CD4-positive, alpha-beta memory T cell (primary cell): ENCODE measurements at regions of chr1 and their contacts with region 1.

Region 1: DNA sequence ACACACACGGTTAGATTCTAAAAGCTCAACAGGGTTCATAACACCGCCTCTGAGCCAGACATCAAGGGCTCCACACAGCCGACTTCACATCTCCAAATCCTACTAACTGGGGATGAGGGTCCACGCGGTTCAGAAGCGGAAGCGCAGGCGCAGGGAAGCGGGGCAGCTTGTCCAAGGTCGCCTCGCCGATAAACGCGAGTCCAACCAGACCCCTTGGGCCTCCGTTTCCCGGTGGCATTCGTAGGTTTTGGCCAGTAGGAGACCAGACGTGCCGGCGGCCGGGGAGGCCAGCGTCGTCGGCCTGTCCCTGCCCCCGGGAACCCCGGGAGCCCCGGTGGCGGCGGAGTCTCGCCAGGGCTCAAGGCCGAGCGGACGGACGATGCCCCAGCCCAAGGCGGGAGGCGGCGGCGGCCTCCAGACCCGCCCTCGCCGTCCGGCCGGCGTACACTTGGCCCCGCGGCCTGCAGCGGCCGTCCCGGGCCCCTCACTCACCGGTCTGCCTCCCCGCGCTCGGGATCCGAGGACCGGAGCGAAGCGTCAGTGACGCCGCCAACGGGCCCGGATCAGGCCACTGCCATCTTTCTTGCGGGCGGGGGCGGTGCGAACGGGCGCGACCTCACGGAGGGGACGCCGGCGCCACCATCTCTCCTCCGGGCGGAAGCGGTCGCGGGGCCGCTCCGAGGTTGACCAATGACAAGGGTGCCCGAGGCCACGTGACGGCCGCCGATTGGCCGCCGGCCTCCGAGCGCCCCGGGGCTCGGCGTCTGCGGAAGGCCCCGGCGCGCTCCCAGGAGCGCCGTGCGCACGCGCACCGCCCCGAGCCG is at the start of gene SDF4:
- DNase-seq: peak; percentile 96 to 98 (median 96)
- H3K4me3 ChIP-seq: peak within 1 kb of the TSS; percentile 67 to 92
- H3K4me3 Mint-ChIP-seq: peak within 1 kb of the TSS; percentile 93 to 96 (median 94)
- H3K27ac ChIP-seq: peak within 1 kb of the TSS; percentile 96
- H3K27ac Mint-ChIP-seq: peak within 1 kb of the TSS; percentile 92 to 96 (median 95)
- H3K4me1 ChIP-seq: peaks cover 39% of the 10 kb centered on the region
- H3K4me1 Mint-ChIP-seq: peaks cover 15 to 49% (median 30%) of the 10 kb centered on the region in 4 donors
- H3K27me3 ChIP-seq: no peaks in the 10 kb centered on the region
- H3K27me3 Mint-ChIP-seq: no peaks in the 10 kb centered on the region
- total RNA-seq, gene SDF4: 125 to 138 TPM

Region 2: DNA sequence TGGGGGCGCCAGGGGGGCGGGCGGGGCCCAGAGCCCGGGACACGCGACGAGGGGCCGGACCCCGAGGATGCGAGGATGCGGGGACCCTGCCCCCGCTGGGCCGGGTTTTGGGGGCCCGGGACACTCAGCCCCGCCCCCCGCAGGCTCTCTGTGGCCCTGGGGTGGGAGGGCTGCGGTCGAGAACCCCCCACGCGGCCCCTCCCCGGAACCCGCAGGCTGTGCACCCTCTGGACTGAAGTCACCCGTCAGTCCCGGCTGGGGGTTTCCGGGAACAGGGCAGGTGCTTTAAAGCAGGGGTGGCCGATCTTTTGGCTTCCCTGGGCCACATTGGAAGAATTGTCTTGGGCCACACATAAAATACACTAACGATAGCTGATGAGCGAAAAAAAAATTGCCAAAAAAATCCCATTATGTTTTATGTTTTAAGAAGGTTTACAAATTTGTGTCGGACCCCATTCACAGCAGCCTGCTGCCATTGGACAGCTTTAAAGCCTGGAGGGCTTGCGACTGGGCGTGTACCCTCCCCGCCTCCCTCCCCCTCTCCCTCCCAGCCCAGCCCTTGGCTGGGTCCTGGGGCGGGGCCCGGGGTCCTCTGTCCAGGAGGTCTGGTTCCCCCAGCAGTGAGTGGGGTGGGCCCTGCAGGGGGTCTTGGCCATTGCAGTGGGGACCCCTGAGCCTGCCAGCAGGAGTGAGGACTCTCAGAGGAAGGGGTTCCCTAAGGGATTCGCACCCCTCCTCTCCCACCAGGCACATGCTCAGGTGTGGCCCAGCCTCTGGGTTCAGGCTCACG is 94.2 kb before region 1 on chr1:
- CTCF ChIA-PET with region 1: no interaction called
- POLR2A ChIA-PET with region 1: no interaction called
- intact Hi-C with region 1: loop called (anchors 5 kb)
- DNase-seq: peak; percentile 67 to 85 (median 72)
- H3K4me3 ChIP-seq: no peak overlapping the region
- H3K4me3 Mint-ChIP-seq: peak overlapping the region; percentile 60 to 88 (median 82)
- H3K27ac ChIP-seq: peak overlapping the region; percentile 30
- H3K27ac Mint-ChIP-seq: peak overlapping the region; percentile 71 to 97 (median 92)
- H3K4me1 ChIP-seq: peaks cover 24% of the 10 kb centered on the region
- H3K4me1 Mint-ChIP-seq: peaks cover 4 to 25% (median 9%) of the 10 kb centered on the region in 4 donors
- H3K27me3 ChIP-seq: no peaks in the 10 kb centered on the region
- H3K27me3 Mint-ChIP-seq: no peaks in the 10 kb centered on the region

Region 3: DNA sequence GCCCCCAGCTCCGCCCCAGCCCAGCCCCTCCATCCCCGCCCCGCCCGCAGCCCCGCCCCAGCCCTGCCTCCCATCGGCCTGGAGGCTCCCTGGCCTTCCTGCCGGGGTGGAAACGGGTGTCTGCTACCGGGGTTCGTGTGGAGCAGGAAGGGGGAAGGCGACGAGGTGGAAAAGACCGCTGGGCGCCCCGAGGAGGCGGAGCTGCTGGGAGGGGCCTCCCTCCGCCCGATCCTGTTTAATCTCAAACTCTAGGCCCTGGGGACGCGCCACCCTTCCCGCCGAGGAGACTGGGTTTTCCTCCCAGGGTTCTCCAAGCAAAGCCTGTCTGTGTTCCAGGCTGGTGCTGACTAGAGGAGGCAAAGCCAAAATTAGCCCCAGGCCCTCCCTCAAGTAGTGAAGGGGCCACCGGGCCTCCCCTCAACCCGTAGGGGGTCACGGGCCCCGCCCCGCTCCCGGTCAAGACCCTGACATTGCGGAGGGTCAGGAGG is 74.1 kb before region 1 on chr1:
- CTCF ChIA-PET with region 1: interaction called, 3 read pairs
- POLR2A ChIA-PET with region 1: interaction called, 17 read pairs
- intact Hi-C with region 1: no loop called
- DNase-seq: peak; percentile 41 to 71 (median 48)
- H3K4me3 ChIP-seq: peak overlapping the region; percentile 56 to 78
- H3K4me3 Mint-ChIP-seq: peak overlapping the region; percentile 63 to 87 (median 79)
- H3K27ac ChIP-seq: peak overlapping the region; percentile 86
- H3K27ac Mint-ChIP-seq: peak overlapping the region; percentile 58 to 90 (median 77)
- H3K4me1 ChIP-seq: peaks cover 8% of the 10 kb centered on the region
- H3K4me1 Mint-ChIP-seq: peaks cover 0 to 14% (median 3%) of the 10 kb centered on the region in 4 donors
- H3K27me3 ChIP-seq: no peaks in the 10 kb centered on the region
- H3K27me3 Mint-ChIP-seq: no peaks in the 10 kb centered on the region

Region 4: GRCh38 chr1:1206376-1207260 is 25.0 kb before region 1 on chr1 and contains the start of gene TNFRSF18:
- CTCF ChIA-PET with region 1: no interaction called
- POLR2A ChIA-PET with region 1: interaction called, 19 read pairs
- intact Hi-C with region 1: no loop called
- DNase-seq: peak in 3 of 5 donors; percentile 41 to 62 (median 42)
- H3K4me3 ChIP-seq: peak within 1 kb of the TSS in 1 of 2 donors; percentile 57
- H3K4me3 Mint-ChIP-seq: peak within 1 kb of the TSS; percentile 65 to 78 (median 75)
- H3K27ac ChIP-seq: peak within 1 kb of the TSS; percentile 84
- H3K27ac Mint-ChIP-seq: peak within 1 kb of the TSS; percentile 57 to 98 (median 77)
- H3K4me1 ChIP-seq: peaks cover 49% of the 10 kb centered on the region
- H3K4me1 Mint-ChIP-seq: peaks cover 9 to 34% (median 21%) of the 10 kb centered on the region in 4 donors
- H3K27me3 ChIP-seq: no peaks in the 10 kb centered on the region
- H3K27me3 Mint-ChIP-seq: no peaks in the 10 kb centered on the region
- total RNA-seq, gene TNFRSF18: 8.0 to 8.6 TPM

Region 5: DNA sequence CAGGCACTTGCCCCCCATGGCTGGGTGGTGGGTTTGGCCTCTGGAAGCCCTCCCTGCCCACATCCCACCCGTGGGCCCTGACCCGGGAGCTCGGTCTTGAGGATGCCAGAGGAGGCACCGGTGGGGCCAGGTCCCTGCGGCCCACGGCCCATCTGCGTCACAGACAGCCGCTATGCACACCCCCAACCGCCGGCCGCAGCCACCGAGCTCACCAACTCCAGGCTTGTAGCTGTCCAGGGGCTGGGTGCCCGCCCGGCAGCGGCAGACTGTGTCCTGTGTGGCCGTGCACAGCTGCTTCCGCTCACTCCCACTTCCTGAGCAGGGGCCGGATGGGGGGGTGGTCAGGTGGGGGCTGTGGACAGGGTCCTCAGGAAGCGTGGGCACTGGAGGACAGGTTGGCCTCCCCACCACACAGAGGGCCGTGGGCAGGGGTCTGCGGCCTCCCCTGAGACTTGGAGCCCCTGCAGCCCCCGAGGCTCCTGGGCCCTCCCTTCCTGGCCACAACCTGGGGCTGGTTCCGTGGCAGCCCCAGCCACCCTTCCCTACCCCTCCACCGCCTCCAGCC is 18.8 kb before region 1 on chr1:
- CTCF ChIA-PET with region 1: interaction called, 5 read pairs
- POLR2A ChIA-PET with region 1: interaction called, 19 read pairs
- intact Hi-C with region 1: loop called (anchors 2 kb)
- DNase-seq: peak; percentile 46 to 71 (median 57)
- H3K4me3 ChIP-seq: peak overlapping the region; percentile 55 to 78
- H3K4me3 Mint-ChIP-seq: peak overlapping the region; percentile 43 to 83 (median 74)
- H3K27ac ChIP-seq: peak overlapping the region; percentile 86
- H3K27ac Mint-ChIP-seq: peak overlapping the region in 6 of 7 donors; percentile 25 to 98 (median 57)
- H3K4me1 ChIP-seq: peaks cover 80% of the 10 kb centered on the region
- H3K4me1 Mint-ChIP-seq: peaks cover 17 to 64% (median 40%) of the 10 kb centered on the region in 4 donors
- H3K27me3 ChIP-seq: no peaks in the 10 kb centered on the region
- H3K27me3 Mint-ChIP-seq: no peaks in the 10 kb centered on the region

Region 6: DNA sequence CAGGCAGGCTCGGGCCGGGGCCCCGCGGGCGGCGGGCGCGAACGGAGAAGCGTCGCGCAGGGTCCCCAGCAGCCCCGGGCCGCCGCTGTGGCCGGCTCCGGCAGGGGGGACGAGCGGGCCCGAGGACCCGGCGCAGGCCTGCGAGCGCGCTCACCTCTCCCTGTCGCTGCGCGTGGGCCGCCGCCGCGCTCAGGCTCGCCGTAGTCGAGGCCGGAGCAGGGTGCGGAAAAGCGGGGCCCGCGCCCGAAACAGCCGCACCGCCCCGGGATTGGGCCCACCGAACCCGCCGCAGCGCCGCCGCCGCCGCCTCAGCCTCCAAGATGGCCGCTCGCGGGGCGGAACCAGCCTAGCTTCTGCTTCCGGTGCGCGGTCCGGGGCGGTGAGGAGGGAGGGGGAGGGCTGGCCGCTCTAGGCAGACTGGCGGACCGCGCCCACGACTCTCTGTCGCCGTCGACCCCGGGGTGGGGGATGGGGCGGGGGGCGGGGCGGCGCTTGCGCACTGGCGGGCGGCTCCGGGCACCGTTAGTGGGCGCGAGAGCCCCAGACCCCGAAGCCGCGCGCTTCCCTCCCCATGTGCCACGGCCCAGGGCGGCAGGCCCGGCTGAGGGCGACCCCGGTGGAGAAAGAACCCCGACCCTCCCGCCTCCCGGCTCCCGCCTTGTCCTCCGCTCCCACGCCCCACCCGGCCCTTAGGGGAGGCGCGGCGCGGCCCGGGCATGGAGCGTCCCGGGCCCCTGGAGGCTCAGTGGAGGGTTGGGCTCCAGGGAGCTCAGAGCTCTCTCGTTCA is 42.1 kb after region 1 on chr1 and contains the start of gene UBE2J2:
- CTCF ChIA-PET with region 1: no interaction called
- POLR2A ChIA-PET with region 1: interaction called, 4 read pairs
- intact Hi-C with region 1: loop called (anchors 1 kb)
- DNase-seq: peak; percentile 89 to 92 (median 90)
- H3K4me3 ChIP-seq: peak within 1 kb of the TSS; percentile 33 to 80
- H3K4me3 Mint-ChIP-seq: peak within 1 kb of the TSS; percentile 86 to 88 (median 87)
- H3K27ac ChIP-seq: peak within 1 kb of the TSS; percentile 83
- H3K27ac Mint-ChIP-seq: peak within 1 kb of the TSS; percentile 83 to 96 (median 89)
- H3K4me1 ChIP-seq: peaks cover 43% of the 10 kb centered on the region
- H3K4me1 Mint-ChIP-seq: peaks cover 22 to 40% (median 32%) of the 10 kb centered on the region in 4 donors
- H3K27me3 ChIP-seq: no peaks in the 10 kb centered on the region
- H3K27me3 Mint-ChIP-seq: no peaks in the 10 kb centered on the region
- total RNA-seq, gene UBE2J2: 82.8 to 92.9 TPM

Region 7: DNA sequence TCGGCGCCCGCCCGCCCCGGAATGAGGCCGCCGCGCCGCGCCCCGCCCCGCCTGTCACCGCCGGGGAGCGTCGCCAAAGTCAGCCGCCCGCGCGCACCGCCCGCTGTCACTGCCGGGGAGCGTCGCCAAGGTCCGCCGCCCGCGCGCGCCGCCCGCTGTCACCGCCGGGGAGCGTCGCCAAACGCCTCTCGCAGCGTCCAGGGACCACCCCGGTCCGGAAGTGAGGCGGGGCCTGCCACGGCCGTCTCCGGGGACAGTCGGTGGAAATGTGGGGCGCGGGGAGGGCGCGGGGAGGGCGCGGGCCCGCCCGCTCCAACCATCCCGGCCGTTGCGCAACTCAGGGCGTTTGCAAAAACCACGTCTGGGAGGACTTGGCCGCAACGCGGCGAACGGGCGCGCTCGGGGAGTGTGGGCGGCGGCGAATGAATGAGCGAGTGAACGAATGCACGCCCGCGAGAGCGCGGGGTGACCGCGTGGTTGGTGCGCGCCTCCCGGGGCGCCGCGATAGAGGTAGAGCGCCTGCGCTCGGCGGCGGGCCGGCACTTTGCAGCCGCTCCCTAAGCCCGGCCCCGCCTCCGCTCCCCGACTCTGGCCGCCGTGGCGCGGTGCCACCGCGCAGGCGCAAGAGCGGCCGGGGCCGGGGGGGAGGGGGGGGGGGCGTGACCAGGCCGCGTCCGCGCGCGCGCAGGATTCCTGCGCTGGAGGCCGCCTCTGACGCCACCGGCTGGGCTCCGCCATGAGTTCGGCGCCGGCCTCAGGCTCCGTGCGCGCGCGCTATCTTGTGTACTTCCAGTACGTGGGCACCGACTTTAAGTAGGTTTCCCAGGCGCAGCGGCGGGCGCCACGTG is 76.5 kb after region 1 on chr1 and contains the starts of genes ACAP3 and PUSL1:
- CTCF ChIA-PET with region 1: no interaction called
- POLR2A ChIA-PET with region 1: no interaction called
- intact Hi-C with region 1: loop called (anchors 1 kb)
- DNase-seq: peak; percentile 92 to 94 (median 92)
- H3K4me3 ChIP-seq: peak within 1 kb of the TSS; percentile 61 to 83
- H3K4me3 Mint-ChIP-seq: peak within 1 kb of the TSS; percentile 86 to 92 (median 89)
- H3K27ac ChIP-seq: peak within 1 kb of the TSS; percentile 77
- H3K27ac Mint-ChIP-seq: peak within 1 kb of the TSS; percentile 89 to 96 (median 91)
- H3K4me1 ChIP-seq: peaks cover 36% of the 10 kb centered on the region
- H3K4me1 Mint-ChIP-seq: peaks cover 13 to 29% (median 20%) of the 10 kb centered on the region in 4 donors
- H3K27me3 ChIP-seq: no peaks in the 10 kb centered on the region
- H3K27me3 Mint-ChIP-seq: no peaks in the 10 kb centered on the region
- total RNA-seq, gene ACAP3: 59.7 to 65.6 TPM
- total RNA-seq, gene PUSL1: 24.1 to 27.9 TPM

Region 8: GRCh38 chr1:1406817-1407635 is 175.4 kb after region 1 on chr1 and contains the start of gene MRPL20:
- CTCF ChIA-PET with region 1: no interaction called
- POLR2A ChIA-PET with region 1: no interaction called
- intact Hi-C with region 1: no loop called
- DNase-seq: peak; percentile 93 to 96 (median 95)
- H3K4me3 ChIP-seq: peak within 1 kb of the TSS; percentile 76 to 95
- H3K4me3 Mint-ChIP-seq: peak within 1 kb of the TSS; percentile 90 to 96 (median 94)
- H3K27ac ChIP-seq: peak within 1 kb of the TSS; percentile 93
- H3K27ac Mint-ChIP-seq: peak within 1 kb of the TSS; percentile 80 to 97 (median 95)
- H3K4me1 ChIP-seq: peaks cover 30% of the 10 kb centered on the region
- H3K4me1 Mint-ChIP-seq: peaks cover 13 to 51% (median 33%) of the 10 kb centered on the region in 4 donors
- H3K27me3 ChIP-seq: no peaks in the 10 kb centered on the region
- H3K27me3 Mint-ChIP-seq: no peaks in the 10 kb centered on the region
- total RNA-seq, gene MRPL20: 119 to 123 TPM